Breast epithelium (tissue), 4 donors: ENCODE measurements at regions of chr15 and their contacts with region 1.

Region 1: DNA sequence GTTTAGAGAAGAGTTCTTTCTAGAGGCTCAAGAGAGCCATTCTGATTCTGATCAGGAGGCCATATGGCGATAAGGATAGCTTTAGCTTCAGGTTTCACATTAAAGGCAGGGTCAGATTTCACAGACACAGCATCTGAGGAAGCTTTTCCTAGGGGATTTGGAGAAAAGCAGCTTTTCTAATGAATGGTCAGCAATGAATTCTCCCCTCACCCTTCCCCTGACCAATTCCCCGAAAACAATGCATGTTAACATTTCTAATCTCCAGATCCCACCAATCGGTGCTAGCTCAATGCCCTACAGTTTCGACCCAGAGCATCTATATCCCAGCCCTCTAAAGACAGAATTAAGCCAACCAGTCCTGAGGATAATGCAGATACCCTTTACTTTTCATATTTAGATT is 9.8 kb downstream of the AGBL1 start:
- DNase-seq: no peak
- H3K4me3 ChIP-seq: no peak overlapping the region
- H3K27ac ChIP-seq: no peak overlapping the region
- H3K4me1 ChIP-seq: no peaks in the 10 kb centered on the region
- H3K27me3 ChIP-seq: no peaks in the 10 kb centered on the region
- CTCF ChIP-seq: no peak
- POLR2A ChIP-seq: no peak

Region 2: GRCh38 chr15:87118435-87118834 is 1029.0 kb after region 1 on chr15:
- intact Hi-C with region 1: loop called (anchors 10 kb)
- DNase-seq: no peak
- H3K4me3 ChIP-seq: no peak overlapping the region
- H3K27ac ChIP-seq: no peak overlapping the region
- H3K4me1 ChIP-seq: no peaks in the 10 kb centered on the region
- H3K27me3 ChIP-seq: no peaks in the 10 kb centered on the region
- CTCF ChIP-seq: no peak
- POLR2A ChIP-seq: no peak